PC-3 (cell line): ENCODE measurements at regions of chr2 and their contacts with region 1.

Region 1: DNA sequence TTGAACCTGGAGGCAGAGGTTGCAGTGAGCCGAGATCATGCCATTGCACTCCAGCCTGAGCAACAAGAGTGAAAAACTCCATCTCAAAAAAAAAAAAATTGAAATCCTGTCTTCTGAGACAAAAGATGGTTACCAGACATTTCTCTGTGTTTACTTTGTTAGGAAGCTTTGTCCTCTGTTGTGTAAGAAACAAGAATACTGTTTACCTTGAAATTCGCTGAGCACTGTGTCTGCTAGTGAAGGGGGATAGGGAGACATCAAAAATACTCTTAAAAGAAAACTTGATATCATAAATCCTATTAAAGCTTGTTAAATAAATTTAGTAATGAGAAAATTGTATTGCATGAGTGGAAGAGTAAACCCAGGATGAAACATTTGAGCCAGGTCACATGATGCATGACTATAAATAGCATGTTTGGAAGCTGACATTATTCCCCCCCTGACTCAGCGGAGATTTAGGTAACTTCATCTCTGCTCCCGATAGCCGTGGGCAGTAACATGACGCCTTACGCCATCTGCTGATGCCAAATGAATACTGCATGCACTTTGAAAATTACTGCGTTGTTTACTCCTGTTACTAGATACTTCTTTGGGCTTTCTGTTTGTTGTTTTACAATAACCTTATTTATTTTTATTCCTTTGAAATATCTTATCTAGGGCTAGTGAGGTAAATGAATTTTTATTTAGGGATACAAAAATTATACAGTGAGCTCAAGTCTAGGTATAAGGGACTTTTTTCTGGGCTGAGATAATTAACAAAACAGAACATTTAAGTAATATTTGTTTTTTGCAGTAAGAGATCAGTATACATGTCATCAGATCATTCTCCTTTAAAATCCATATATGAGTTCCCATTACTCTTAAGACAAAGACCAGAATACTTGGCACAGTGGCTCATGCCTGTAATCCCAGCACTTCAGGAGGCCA is 134.9 kb downstream of the MAP3K20 start:
- DNase-seq: peak; percentile 93
- ATAC-seq: peak; percentile 96
- H3K4me3 ChIP-seq: no peak overlapping the region
- H3K27ac ChIP-seq: peak overlapping the region; percentile 54
- H3K4me1 ChIP-seq: peaks cover 4% of the 10 kb centered on the region
- H3K27me3 ChIP-seq: no peaks in the 10 kb centered on the region
- CTCF ChIP-seq: peak; percentile 95

Region 2: DNA sequence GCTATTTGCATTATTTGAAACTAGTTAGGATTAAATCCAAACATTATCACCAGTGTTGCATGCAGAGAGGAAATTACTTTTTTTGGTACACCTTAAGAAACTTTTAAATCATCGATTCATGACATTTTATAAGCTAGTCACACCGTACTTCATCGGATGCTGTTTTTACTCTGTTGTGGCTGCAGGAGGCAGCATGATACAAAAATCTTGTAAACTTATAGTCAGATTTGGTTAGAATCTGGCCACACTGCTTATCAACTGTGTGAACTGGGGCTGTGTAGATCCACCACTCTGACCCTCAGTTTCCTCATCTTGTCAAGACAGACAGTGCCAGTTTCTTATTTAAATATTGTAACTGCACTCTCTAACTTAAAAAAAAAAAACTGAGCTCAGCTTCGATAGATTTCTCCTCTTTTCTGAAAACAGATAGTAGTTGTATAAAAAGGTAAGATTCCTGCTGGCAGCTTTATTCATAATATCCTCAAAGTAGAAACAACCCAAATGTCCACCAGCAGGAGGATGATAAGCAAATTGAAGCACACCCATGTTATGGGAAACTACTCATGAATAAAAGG is 397.1 kb before region 1 on chr2:
- CTCF ChIA-PET with region 1: no interaction called
- POLR2A ChIA-PET with region 1: no interaction called
- intact Hi-C with region 1: loop called (anchors 10 kb)
- DNase-seq: peak; percentile 58
- ATAC-seq: peak; percentile 82
- H3K4me3 ChIP-seq: no peak overlapping the region
- H3K27ac ChIP-seq: no peak overlapping the region
- H3K4me1 ChIP-seq: no peaks in the 10 kb centered on the region
- H3K27me3 ChIP-seq: no peaks in the 10 kb centered on the region
- CTCF ChIP-seq: peak; percentile 86

Region 3: DNA sequence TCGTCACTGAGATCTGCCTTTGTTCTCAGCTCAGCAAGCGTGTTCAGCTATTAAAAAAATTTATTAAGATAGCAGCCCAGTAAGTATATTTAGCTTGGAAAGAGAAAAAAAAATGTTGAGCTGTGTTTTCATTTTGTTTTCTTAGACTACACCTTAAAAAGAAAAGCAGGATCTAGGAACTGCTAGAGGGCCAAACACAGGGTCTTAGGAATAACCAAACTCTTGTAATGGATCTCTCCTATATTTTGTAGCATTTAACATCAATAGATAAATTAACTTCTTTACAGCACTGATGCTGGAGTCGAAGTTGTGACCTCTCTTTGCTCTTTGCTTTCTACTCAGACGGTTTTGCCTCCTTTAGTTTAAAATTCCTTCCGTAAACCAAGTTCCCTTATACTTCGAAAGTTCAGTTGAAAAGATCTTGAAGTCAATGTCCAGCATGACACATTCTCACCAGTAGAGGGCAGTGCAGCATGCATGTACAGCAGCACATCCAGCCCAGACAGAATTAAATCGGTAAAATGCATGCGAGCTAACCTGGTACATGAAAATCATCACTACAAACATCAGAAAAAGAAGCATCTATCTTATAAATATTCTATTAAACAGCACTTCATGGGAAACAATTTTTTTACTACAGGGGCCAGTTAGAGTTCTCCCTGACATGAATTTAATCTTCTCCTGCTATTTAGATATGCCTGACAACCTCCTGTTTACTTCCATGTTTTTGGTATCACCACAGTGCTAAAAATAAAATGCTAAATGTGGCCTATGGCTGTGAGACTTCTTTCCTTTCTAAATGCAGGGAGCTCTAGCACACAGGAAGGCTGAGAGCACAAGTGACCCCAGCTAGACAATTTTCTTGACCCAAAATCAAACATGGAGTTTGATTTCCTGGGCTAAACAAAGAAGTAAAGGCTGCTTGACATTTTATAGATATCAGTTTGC is 183.1 kb before region 1 on chr2:
- CTCF ChIA-PET with region 1: interaction called, 13 read pairs
- POLR2A ChIA-PET with region 1: interaction called, 5 read pairs
- intact Hi-C with region 1: loop called (anchors 1 kb)
- DNase-seq: peak; percentile 93
- ATAC-seq: peak; percentile 88
- H3K4me3 ChIP-seq: no peak overlapping the region
- H3K27ac ChIP-seq: no peak overlapping the region
- H3K4me1 ChIP-seq: peaks cover 4% of the 10 kb centered on the region
- H3K27me3 ChIP-seq: no peaks in the 10 kb centered on the region
- CTCF ChIP-seq: peak; percentile 96

Region 4: GRCh38 chr2:173048897-173049661 is 161.5 kb before region 1 on chr2:
- CTCF ChIA-PET with region 1: no interaction called
- POLR2A ChIA-PET with region 1: no interaction called
- intact Hi-C with region 1: loop called (anchors 1 kb)
- DNase-seq: peak; percentile 97
- ATAC-seq: peak; percentile 88
- H3K4me3 ChIP-seq: peak overlapping the region; percentile 31; the same call in 1 of the 2 replicates
- H3K27ac ChIP-seq: peak overlapping the region; percentile 92
- H3K4me1 ChIP-seq: peaks cover 68% of the 10 kb centered on the region
- H3K27me3 ChIP-seq: no peaks in the 10 kb centered on the region
- CTCF ChIP-seq: no peak

Region 5: DNA sequence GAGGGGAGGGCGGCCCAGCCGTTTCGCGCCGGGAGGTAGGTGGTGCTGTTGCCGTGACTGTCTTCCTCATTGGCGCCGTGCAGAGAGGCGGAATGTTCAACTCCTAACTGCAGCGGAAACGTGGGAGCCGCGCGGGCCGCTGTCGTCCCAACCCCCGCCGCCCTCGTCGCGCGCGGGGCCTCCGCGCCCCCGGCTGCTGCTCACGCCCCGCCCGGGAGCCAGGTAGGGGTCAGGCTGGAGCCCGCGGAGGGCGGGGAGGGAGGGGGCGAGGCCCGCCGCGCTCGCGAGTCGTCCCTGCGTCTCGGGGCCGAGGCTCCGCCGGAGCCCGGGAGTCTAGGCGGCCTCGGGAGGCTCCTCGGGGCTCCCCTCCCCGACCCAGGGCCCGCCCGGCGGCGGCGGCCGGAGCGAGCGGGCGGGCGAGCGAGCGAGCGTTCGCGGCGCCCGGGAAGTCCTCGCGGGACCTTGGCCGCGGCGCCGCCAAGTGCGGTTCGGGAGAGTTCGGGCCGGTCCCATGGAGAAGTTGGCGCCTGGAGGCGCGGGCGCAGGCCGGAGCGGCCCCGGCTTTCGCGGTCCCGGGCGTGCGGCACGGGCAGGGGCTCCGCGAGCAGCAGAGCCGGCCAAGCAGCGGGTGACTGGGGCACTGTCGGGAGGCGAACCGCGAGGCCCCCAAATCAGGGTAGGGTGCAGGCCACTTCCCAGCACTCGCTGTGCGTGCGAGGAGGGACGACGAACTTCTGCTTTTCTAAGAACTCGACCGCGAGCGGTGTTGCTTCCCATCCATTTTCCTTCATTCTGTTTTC is 134.6 kb before region 1 on chr2 and contains the start of gene MAP3K20:
- CTCF ChIA-PET with region 1: no interaction called
- POLR2A ChIA-PET with region 1: no interaction called
- intact Hi-C with region 1: loop called (anchors 1 kb)
- DNase-seq: peak; percentile 60
- ATAC-seq: peak; percentile 53
- H3K4me3 ChIP-seq: peak within 1 kb of the TSS; percentile 90
- H3K27ac ChIP-seq: peak within 1 kb of the TSS; percentile 86
- H3K4me1 ChIP-seq: peaks cover 38% of the 10 kb centered on the region
- H3K27me3 ChIP-seq: no peaks in the 10 kb centered on the region
- CTCF ChIP-seq: peak; percentile 42
- total RNA-seq, gene MAP3K20: 23.1 and 29.8 TPM in 2 replicates

Region 6: DNA sequence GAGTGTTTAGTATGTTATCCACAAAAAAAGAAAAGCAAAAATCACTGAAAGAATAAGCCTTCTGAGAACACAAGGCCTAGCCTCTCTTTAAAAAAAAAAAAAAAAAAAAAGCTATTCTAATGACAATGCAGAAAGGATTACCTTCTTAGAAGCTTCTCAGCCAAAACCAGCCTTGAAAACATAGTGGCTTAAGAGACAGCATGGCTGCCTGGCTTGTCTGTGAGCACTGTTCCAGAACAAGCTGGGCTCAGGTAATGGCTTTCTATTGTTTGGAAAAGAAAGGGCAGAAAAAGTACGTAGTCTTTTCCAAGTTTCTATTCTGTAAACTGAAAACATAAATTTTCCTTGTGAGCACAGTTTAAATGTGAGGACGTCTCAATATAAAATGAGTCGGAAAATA is 15.4 kb before region 1 on chr2:
- CTCF ChIA-PET with region 1: interaction called, 11 read pairs
- POLR2A ChIA-PET with region 1: no interaction called
- intact Hi-C with region 1: no loop called
- DNase-seq: no peak
- ATAC-seq: no peak
- H3K4me3 ChIP-seq: no peak overlapping the region
- H3K27ac ChIP-seq: no peak overlapping the region
- H3K4me1 ChIP-seq: peaks cover 7% of the 10 kb centered on the region; the same call in 1 of the 2 replicates
- H3K27me3 ChIP-seq: no peaks in the 10 kb centered on the region
- CTCF ChIP-seq: no peak

Region 7: DNA sequence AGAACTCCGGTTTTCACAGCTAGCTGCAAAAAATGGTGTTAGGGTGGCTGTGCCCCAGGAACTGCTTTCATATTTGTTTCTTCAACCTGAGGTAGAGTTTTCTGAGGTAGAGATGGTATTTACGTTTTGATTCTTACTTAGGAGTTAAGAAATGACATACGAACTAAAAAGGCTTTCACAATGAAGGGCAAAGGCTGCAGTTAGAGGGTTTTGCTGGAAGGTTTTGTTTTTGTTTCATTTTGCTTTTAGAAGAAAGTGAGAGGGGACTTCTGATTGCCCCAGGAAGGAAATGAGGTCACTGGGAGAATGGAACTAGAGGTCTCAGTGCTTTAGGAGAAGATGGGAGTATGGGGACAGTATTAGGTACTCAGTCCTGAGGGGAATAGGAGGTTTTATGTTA is 159.7 kb after region 1 on chr2:
- CTCF ChIA-PET with region 1: no interaction called
- POLR2A ChIA-PET with region 1: no interaction called
- intact Hi-C with region 1: no loop called
- DNase-seq: no peak
- ATAC-seq: no peak
- H3K4me3 ChIP-seq: no peak overlapping the region
- H3K27ac ChIP-seq: no peak overlapping the region
- H3K4me1 ChIP-seq: no peaks in the 10 kb centered on the region
- H3K27me3 ChIP-seq: no peaks in the 10 kb centered on the region
- CTCF ChIP-seq: no peak

Region 8: DNA sequence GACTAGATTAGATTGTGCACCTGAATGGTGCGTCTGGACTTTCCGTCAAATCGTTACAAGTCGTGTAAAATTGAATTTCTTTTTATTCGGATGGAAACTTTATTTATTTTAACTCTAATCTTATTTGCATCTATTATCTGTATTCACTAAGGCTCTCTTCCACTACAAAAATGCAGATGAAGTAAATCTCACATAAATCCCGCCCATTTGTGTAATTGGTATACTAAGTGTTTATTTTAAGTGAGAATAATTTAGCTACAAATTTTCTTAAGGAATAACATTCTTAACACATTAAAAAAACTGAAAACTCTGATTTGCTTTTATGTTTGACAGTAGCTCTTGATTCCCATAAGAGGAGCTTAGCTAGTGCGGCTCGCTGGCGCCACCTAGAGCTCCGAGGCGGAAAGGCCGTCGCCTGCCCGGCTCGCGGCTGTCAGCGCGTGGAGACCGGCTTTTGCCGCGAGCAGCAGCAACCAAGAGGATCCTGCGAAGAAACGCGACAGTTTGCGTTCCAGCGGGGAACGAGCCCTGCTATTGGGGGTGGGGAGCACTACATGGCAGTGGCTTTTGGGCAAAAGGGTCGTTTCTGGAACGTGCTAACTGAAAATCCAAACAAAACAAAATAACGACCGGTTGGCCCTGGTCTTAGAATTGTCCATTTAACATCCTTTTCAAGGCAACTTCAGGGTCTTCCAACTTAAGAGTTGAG is 1130.9 kb after region 1 on chr2:
- CTCF ChIA-PET with region 1: no interaction called
- POLR2A ChIA-PET with region 1: no interaction called
- intact Hi-C with region 1: loop called (anchors 10 kb)
- DNase-seq: peak; percentile 93
- ATAC-seq: peak; percentile 68
- H3K4me3 ChIP-seq: peak overlapping the region; percentile 62
- H3K27ac ChIP-seq: peak overlapping the region; percentile 21
- H3K4me1 ChIP-seq: peaks cover 23% of the 10 kb centered on the region
- H3K27me3 ChIP-seq: no peaks in the 10 kb centered on the region
- CTCF ChIP-seq: peak; percentile 98